MCF 10A (cell line): ENCODE measurements at regions of chr3 and their contacts with region 1.

Region 1: DNA sequence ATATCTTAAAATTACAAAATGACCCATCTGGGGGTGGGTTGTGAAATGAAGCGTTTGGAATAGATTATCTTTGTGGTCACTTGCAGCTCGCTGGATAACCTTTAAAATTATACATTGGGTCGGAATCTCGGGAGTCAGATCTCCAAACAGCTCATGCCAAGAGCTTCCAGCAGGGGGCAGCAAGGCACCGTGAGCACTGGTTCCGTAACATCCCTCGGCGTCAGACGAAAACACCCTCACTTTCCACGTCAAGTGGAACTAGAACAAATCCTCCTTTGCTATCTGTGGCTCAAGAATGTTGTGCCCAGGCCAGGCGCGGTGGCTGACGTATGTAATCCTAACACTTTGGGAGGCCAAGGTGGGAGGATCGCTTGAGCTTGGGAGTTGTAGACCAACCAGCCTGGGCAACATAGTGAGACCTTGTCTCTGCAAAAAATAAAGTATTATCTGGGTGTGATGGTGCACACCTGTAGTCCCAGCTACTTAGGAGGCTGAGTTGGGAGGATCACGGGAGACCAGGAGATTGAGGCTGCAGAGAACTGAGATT is 31.1 kb downstream of the UMPS start:
- DNase-seq: peak; percentile 75
- H3K4me3 Mint-ChIP-seq: no peak overlapping the region
- H3K27ac Mint-ChIP-seq: peak overlapping the region; percentile 53
- H3K4me1 Mint-ChIP-seq: peaks cover 4% of the 10 kb centered on the region
- H3K27me3 Mint-ChIP-seq: no peaks in the 10 kb centered on the region
- CTCF ChIP-seq: peak; percentile 90

Region 2: DNA sequence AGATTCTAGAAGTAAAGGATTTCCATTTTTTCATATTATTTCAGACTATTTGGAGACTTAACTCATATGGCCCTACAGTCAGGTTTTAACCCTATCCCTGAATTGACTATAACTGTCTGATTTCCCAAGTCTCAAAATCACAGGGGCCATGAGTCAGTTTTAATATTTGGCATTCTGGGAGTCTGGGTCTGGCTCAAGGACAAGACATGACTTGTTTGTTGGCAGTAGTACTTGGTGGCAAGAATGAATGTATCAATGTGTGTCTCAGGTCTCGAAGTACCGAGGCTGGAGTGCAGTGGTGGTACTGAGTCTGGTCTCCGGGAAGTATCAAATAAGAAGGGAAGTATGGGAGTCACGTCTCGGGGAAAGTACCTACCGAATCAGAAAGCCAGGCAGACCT is 20.3 kb before region 1 on chr3:
- CTCF ChIA-PET with region 1: interaction called, 20 read pairs
- POLR2A ChIA-PET with region 1: no interaction called
- intact Hi-C with region 1: no loop called
- DNase-seq: peak; percentile 83
- H3K4me3 Mint-ChIP-seq: no peak overlapping the region
- H3K27ac Mint-ChIP-seq: peak overlapping the region; percentile 24
- H3K4me1 Mint-ChIP-seq: peaks cover 21% of the 10 kb centered on the region
- H3K27me3 Mint-ChIP-seq: no peaks in the 10 kb centered on the region
- CTCF ChIP-seq: no peak

Region 3: GRCh38 chr3:124786441-124787241 is 25.3 kb after region 1 on chr3:
- CTCF ChIA-PET with region 1: interaction called, 72 read pairs
- POLR2A ChIA-PET with region 1: interaction called, 7 read pairs
- intact Hi-C with region 1: no loop called
- DNase-seq: peak; percentile 41
- H3K4me3 Mint-ChIP-seq: no peak overlapping the region
- H3K27ac Mint-ChIP-seq: peak overlapping the region; percentile 23
- H3K4me1 Mint-ChIP-seq: peaks cover 10% of the 10 kb centered on the region
- H3K27me3 Mint-ChIP-seq: no peaks in the 10 kb centered on the region
- CTCF ChIP-seq: peak; percentile 38

Region 4: GRCh38 chr3:124895756-124896155 is 134.4 kb after region 1 on chr3:
- CTCF ChIA-PET with region 1: interaction called, 263 read pairs
- POLR2A ChIA-PET with region 1: interaction called, 22 read pairs
- intact Hi-C with region 1: no loop called
- DNase-seq: no peak
- H3K4me3 Mint-ChIP-seq: no peak overlapping the region
- H3K27ac Mint-ChIP-seq: no peak overlapping the region
- H3K4me1 Mint-ChIP-seq: no peaks in the 10 kb centered on the region
- H3K27me3 Mint-ChIP-seq: no peaks in the 10 kb centered on the region
- CTCF ChIP-seq: no peak

Region 5: DNA sequence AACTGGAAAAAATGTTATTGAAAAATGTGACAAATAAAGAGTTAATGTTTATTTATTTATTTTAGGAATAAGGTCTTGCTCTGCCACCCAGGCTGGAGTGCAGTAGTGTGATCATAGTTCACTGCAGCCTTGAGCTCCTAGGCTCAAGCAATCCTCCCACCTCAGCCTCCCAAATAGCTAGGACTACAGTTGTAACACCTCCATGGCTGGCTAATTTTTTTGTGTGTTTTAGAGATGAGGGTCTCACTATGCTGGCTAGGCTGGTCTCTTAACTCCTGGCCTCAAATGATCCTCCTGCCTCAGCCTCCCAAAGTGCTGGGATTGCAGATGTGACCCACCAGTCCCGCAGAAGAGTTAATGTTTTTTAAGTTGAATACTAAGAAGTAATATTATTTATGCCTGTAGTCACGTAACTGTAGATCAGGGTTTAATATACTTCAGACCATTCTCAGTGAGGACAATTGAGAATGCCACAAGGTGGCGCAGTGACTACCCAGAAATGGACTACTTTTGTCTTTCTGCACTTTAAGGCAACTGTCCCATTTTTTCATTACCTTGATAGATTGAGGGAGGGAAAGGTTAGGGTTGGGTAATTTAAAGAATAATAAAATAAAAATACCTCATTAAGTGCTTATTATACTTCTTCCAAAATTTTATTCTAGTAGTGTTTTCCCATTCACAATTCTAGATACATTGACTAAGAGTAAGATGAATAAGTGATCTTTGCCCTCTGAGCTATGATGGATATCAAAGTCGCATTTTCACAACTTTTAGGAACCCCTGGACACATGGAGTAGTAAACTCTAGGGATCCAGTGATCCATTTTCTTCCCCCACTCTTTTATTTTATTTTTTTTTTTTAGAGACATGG is 167.2 kb after region 1 on chr3:
- CTCF ChIA-PET with region 1: interaction called, 16 read pairs
- POLR2A ChIA-PET with region 1: no interaction called
- intact Hi-C with region 1: no loop called
- DNase-seq: peak; percentile 78
- H3K4me3 Mint-ChIP-seq: no peak overlapping the region
- H3K27ac Mint-ChIP-seq: no peak overlapping the region
- H3K4me1 Mint-ChIP-seq: peaks cover 8% of the 10 kb centered on the region
- H3K27me3 Mint-ChIP-seq: no peaks in the 10 kb centered on the region
- CTCF ChIP-seq: peak; percentile 48

Region 6: DNA sequence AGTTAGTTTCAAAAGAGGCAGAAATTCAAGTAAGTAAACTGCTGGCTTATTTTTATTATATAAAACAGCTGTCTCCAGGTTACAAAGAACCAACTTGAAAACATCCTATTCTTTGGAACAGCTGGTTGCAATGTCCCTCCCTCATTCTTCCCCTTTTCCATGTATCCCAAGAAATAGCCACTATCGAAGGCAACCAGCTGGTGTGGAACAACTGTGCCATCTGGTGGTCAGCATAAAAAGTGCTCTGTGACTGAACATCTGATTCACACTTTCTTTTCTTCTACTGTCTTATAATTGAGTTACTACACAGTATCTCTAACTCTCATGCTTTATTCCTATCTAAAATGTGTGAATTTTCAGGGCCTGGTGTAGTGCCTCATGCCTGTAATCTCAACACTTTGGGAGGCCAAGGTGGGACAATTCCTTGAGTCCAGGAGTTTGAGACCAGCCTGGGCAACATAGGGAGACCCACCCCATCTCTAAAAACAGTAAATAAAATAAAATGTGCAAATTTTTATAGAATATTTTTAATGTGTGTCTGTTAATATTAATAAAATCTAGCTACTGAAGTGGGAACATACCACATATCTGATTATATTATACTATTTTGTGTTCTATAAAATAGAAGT is 824.4 kb after region 1 on chr3:
- CTCF ChIA-PET with region 1: interaction called, 22 read pairs
- POLR2A ChIA-PET with region 1: no interaction called
- intact Hi-C with region 1: loop called (anchors 1 kb)
- DNase-seq: peak; percentile 72
- H3K4me3 Mint-ChIP-seq: no peak overlapping the region
- H3K27ac Mint-ChIP-seq: no peak overlapping the region
- H3K4me1 Mint-ChIP-seq: peaks cover 9% of the 10 kb centered on the region
- H3K27me3 Mint-ChIP-seq: no peaks in the 10 kb centered on the region
- CTCF ChIP-seq: peak; percentile 87